H1 (cell line): ENCODE measurements at regions of chr9 and their contacts with region 1.

Region 1: GRCh38 chr9:126849591-126850225 is 10.7 kb upstream of the ZBTB34 start:
- DNase-seq: no peak
- H3K4me3 ChIP-seq: no peak overlapping the region
- H3K27ac ChIP-seq: no peak overlapping the region
- H3K4me1 ChIP-seq: no peaks in the 10 kb centered on the region
- H3K27me3 ChIP-seq: no peaks in the 10 kb centered on the region; a peak in 1 of 7 replicates
- CTCF ChIP-seq: peak in 1 of 3 experiments; percentile 6; a peak in 1 of 4 replicates
- EP300 ChIP-seq: no peak
- POLR2A ChIP-seq: no peak
- RAD21 ChIP-seq: no peak; a peak in 1 of 4 replicates

Region 2: GRCh38 chr9:126860077-126860756 is 10.5 kb after region 1 on chr9 and contains the start of gene ZBTB34:
- CTCF ChIA-PET with region 1: interaction called, 12 read pairs
- POLR2A ChIA-PET with region 1: interaction called, 3 read pairs
- DNase-seq: peak; percentile 9 to 93
- H3K4me3 ChIP-seq: peak within 1 kb of the TSS; percentile 48 to 85 (median 74)
- H3K27ac ChIP-seq: no peak within 1 kb of the TSS; the same call in 1 of the 2 replicates
- H3K4me1 ChIP-seq: peaks cover 5 to 17% (median 8%) of the 10 kb centered on the region in 4 experiments
- H3K27me3 ChIP-seq: no peaks in the 10 kb centered on the region; a peak in 3 of 7 replicates
- CTCF ChIP-seq: peak; percentile 81 to 90 (median 89)
- EP300 ChIP-seq: no peak
- POLR2A ChIP-seq: peak in 1 of 2 experiments; percentile 32; a peak in 1 of 3 replicates
- RAD21 ChIP-seq: peak; percentile 8 to 53; a peak in 3 of 4 replicates
- total RNA-seq, gene ZBTB34: 15.9 and 16.9 TPM in 2 replicates

Region 3: DNA sequence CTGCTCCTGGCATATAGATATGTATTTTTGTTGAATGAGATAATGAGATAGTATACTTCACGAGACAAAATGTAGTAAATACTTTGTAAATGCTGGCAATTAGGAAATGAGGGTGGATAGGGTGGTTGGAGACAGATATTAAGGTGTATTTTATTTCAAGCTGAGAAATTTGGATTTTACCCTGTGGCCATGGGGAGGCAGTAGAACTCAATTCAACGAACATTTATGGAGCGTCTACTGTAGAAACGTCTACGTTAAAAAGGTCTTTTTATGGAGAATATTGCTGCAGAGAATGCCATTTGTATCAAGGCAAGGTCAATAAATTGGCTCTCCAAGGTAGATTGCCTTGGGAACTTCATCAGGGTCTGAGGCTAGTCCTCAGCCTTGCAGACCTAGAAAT is 43.4 kb after region 1 on chr9:
- CTCF ChIA-PET with region 1: no interaction called
- POLR2A ChIA-PET with region 1: no interaction called
- DNase-seq: no peak
- H3K4me3 ChIP-seq: no peak overlapping the region
- H3K27ac ChIP-seq: no peak overlapping the region
- H3K4me1 ChIP-seq: no peaks in the 10 kb centered on the region
- H3K27me3 ChIP-seq: no peaks in the 10 kb centered on the region
- CTCF ChIP-seq: peak in 2 of 3 experiments; percentile 54 to 67; a peak in 2 of 4 replicates
- EP300 ChIP-seq: no peak
- POLR2A ChIP-seq: no peak
- RAD21 ChIP-seq: peak; percentile 62 to 70